ENCODE measurements at regions of chr13 and their contacts with region 1.

Region 1: DNA sequence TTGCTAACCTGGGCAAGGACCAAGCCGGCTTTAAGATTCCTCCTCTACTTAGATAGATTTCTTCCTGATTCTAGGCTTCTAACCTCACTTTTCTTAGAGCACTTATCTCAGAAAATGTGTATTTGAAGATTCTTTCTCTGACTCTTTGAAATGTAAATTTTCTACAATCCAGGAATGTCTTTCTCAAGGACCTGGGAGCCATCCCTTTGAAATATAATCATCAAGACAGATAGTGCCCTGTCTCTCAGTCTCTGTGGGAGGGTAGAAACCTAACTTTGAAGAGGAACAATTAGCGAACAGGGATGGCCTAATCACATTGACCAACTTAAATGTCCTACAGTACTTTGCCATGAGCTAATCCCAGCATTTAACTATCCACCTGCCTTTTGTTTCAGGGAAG is 1646.0 kb downstream of the PCDH9 start:
- DNase-seq: no peak
- H3K4me3 ChIP-seq: no peak overlapping the region
- H3K27me3 ChIP-seq: no peaks in the 10 kb centered on the region
- CTCF ChIP-seq: no peak

Region 2: GRCh38 chr13:65435590-65435989 is 148.5 kb before region 1 on chr13:
- CTCF ChIA-PET with region 1: no interaction called
- POLR2A ChIA-PET with region 1: interaction called, 15 read pairs
- DNase-seq: no peak
- H3K4me3 ChIP-seq: no peak overlapping the region
- H3K27me3 ChIP-seq: no peaks in the 10 kb centered on the region
- CTCF ChIP-seq: no peak